ENCODE measurements at regions of chr2 and their contacts with region 1.

Region 1: GRCh38 chr2:226726546-226726945 is 73.1 kb downstream of the IRS1 start:
- DNase-seq: no peak
- H3K4me3 ChIP-seq: no peak overlapping the region
- CTCF ChIP-seq: no peak
- POLR2A ChIP-seq: no peak

Region 2: GRCh38 chr2:226800941-226801784 is 74.6 kb after region 1 on chr2:
- intact Hi-C with region 1: loop called (anchors 2 kb)
- DNase-seq: peak; percentile 46 to 94
- H3K4me3 ChIP-seq: no peak overlapping the region
- CTCF ChIP-seq: no peak
- POLR2A ChIP-seq: no peak

Region 3: GRCh38 chr2:226887940-226888339 is 161.4 kb after region 1 on chr2:
- intact Hi-C with region 1: no loop called
- DNase-seq: no peak
- H3K4me3 ChIP-seq: no peak overlapping the region
- CTCF ChIP-seq: no peak
- POLR2A ChIP-seq: no peak

Measured in lower leg skin (tissue), 4 donors.